ENCODE measurements at regions of chr2 and their contacts with region 1.

Region 1: DNA sequence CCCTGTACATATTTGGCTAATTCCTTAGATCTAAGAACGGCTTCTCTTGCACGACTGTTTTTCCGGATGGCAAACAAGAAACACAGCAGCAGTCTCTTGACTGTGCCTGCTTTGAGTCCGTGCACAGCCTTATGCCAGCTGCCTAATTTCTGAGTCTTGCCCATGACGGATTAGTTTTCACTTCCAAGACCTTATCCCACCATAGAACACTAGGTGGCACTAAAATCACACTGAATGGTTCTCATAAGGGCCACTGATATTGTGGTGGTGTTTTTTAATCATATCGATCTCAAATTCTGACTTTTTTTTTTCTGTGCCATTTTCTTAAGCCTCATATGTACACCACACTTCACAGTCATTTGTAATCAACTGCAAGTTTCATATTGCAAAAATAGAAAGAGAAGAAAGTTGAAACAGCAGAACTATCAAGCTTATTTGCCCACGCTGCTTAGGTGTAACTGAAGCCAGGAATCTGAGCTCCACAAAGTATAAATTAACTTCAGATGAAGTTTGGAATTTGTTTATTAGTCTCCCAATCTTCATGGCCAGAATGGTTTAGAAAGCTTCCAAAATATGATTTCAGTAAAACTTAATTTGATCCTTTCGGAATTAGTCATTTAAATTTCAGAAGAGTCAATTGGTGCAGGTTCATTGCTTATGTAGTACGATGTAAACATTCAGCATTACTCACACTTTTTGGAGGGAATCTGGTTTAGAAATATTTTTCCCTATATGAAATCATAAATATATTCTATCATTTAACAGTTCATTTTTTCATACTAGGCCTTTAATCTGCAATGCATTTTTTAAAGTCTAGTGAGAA is 45.5 kb upstream of the SCN7A start:
- DNase-seq: peak in 1 of 3 donors; percentile 51
- ATAC-seq: peak; percentile 69
- H3K4me3 ChIP-seq: no peak overlapping the region
- H3K4me1 ChIP-seq: no peaks in the 10 kb centered on the region
- CTCF ChIP-seq: peak; percentile 33

Region 2: GRCh38 chr2:168118733-168119514 is 1579.4 kb after region 1 on chr2:
- intact Hi-C with region 1: loop called in 1 of 2 experiments (anchors 10 kb)
- DNase-seq: peak in 1 of 3 donors; percentile 59
- ATAC-seq: peak; percentile 71
- H3K4me3 ChIP-seq: no peak overlapping the region
- H3K4me1 ChIP-seq: no peaks in the 10 kb centered on the region
- CTCF ChIP-seq: peak; percentile 15

Measured in mucosa of descending colon (tissue), 3 donors.